Naive thymus-derived CD4-positive, alpha-beta T cell (primary cell): ENCODE measurements at regions of chr2 and their contacts with region 1.

Region 1: GRCh38 chr2:221573430-221574230 is 1.5 kb upstream of the EPHA4 start:
- DNase-seq: peak; percentile 60 to 90 (median 77)
- ATAC-seq: peak; percentile 65
- H3K4me3 ChIP-seq: peak overlapping the region; percentile 91
- H3K4me3 Mint-ChIP-seq: peak overlapping the region; percentile 77 to 97 (median 86)
- H3K27ac ChIP-seq: no peak overlapping the region
- H3K27ac Mint-ChIP-seq: peak overlapping the region in 5 of 9 donors; percentile 10 to 76 (median 71)
- H3K4me1 ChIP-seq: peaks cover 11 to 17% of the 10 kb centered on the region in 2 donors
- H3K4me1 Mint-ChIP-seq: peaks cover 22 to 35% (median 31%) of the 10 kb centered on the region in 7 donors
- H3K27me3 ChIP-seq: peaks cover 0 to 4% of the 10 kb centered on the region in 2 donors
- H3K27me3 Mint-ChIP-seq: peaks cover 33 to 68% (median 59%) of the 10 kb centered on the region in 5 donors

Region 2: DNA sequence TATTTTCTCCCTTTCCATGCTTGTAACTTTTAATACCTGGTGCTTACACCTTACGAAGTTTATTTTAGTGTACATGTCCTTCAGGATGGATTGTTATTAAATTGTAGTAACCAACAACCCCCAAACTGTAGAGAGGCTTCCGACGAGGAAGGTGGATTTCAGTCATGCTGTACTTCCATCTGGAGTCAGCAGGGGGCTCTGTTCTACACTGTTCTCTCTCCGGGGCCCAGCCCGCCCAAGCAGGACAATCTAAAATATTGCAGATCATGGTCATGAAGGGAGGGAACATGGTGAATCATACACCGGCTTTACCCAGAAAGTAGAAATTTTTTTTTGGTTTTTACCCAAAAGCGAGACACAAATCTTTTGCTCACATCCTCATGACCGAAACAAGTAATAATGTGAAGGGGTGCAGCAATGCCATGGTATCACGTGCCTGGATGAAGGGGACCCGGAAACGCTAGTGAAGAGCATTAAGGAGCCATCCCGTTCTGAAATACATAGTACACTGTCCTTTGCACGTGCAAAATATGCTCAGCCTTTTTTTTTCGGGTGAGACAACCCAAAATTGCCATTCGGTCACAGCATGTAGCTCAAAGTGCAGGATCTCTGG is 886.3 kb before region 1 on chr2:
- CTCF ChIA-PET with region 1: interaction called, 3 read pairs
- POLR2A ChIA-PET with region 1: no interaction called
- intact Hi-C with region 1: loop called (anchors 1 kb)
- DNase-seq: peak; percentile 13 to 61 (median 50)
- ATAC-seq: peak; percentile 89
- H3K4me3 ChIP-seq: no peak overlapping the region
- H3K4me3 Mint-ChIP-seq: no peak overlapping the region
- H3K27ac ChIP-seq: no peak overlapping the region
- H3K27ac Mint-ChIP-seq: no peak overlapping the region
- H3K4me1 ChIP-seq: no peaks in the 10 kb centered on the region
- H3K4me1 Mint-ChIP-seq: no peaks in the 10 kb centered on the region
- H3K27me3 ChIP-seq: no peaks in the 10 kb centered on the region
- H3K27me3 Mint-ChIP-seq: peaks cover 2 to 35% (median 18%) of the 10 kb centered on the region in 5 donors

Region 3: DNA sequence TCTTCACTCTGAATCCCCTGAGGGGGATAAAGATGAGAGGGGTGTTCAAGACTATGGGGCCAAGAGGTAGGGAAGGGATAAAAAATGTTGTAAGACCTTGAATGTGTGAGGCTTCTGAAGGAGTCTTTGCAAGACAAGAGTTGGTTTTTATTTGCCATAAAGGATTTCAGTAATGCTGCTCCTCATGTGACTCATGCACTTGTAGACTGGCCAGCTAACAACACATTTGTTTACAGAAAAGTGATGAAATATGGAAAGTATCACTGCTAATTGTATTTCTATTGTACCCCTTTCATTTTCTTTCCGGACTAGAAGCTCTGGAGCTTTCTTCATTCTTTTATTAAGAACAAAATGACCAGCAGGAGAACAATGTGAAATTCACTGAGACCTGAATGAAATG is 783.7 kb before region 1 on chr2:
- CTCF ChIA-PET with region 1: no interaction called
- POLR2A ChIA-PET with region 1: no interaction called
- intact Hi-C with region 1: no loop called
- DNase-seq: no peak
- ATAC-seq: no peak
- H3K4me3 ChIP-seq: no peak overlapping the region
- H3K4me3 Mint-ChIP-seq: no peak overlapping the region
- H3K27ac ChIP-seq: no peak overlapping the region
- H3K27ac Mint-ChIP-seq: no peak overlapping the region
- H3K4me1 ChIP-seq: no peaks in the 10 kb centered on the region
- H3K4me1 Mint-ChIP-seq: no peaks in the 10 kb centered on the region
- H3K27me3 ChIP-seq: no peaks in the 10 kb centered on the region
- H3K27me3 Mint-ChIP-seq: peaks cover 0 to 6% (median 0%) of the 10 kb centered on the region in 5 donors

Region 4: DNA sequence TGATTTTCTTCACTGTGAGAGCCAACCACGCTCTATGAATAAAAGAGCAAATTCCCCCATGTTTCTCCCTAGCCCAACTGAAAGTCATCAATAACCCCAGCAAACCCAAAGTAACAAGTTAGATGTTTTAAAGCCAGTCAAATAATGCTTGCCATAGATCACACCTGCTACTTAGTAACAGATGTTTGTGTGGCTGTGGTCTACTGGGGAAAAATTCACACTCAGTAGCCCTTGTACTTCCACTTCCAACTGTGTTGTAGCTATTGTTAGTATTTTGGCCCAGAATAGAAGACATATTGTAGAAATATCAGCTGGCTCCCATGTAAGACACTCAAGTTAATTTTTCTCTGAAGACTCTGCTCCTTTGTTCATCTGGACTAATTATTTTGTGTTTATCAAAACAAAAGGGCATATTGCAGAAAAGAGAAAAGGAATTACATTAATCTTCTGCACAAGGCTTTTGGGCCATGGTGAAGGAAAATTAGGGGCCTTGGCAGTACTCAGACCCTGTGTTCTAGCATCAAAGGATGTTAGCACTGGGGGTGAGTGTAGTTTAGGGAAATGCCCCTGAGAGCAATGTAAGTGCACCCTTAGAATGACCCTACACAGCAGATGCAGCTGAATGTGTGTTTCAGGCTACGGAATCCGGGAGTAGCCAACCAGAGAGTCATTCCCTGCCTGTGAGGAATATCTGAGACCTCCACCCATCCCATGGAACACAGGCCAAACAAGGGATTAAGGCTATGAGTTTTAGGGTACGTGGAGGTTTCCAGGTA is 523.4 kb before region 1 on chr2:
- CTCF ChIA-PET with region 1: no interaction called
- POLR2A ChIA-PET with region 1: no interaction called
- intact Hi-C with region 1: no loop called
- DNase-seq: no peak
- ATAC-seq: no peak
- H3K4me3 ChIP-seq: no peak overlapping the region
- H3K4me3 Mint-ChIP-seq: no peak overlapping the region
- H3K27ac ChIP-seq: no peak overlapping the region
- H3K27ac Mint-ChIP-seq: no peak overlapping the region
- H3K4me1 ChIP-seq: no peaks in the 10 kb centered on the region
- H3K4me1 Mint-ChIP-seq: peaks cover 0 to 7% (median 0%) of the 10 kb centered on the region in 7 donors
- H3K27me3 ChIP-seq: no peaks in the 10 kb centered on the region
- H3K27me3 Mint-ChIP-seq: peaks cover 0 to 4% (median 0%) of the 10 kb centered on the region in 5 donors

Region 5: GRCh38 chr2:221104361-221104811 is 469.2 kb before region 1 on chr2:
- CTCF ChIA-PET with region 1: no interaction called
- POLR2A ChIA-PET with region 1: no interaction called
- intact Hi-C with region 1: loop called (anchors 10 kb)
- DNase-seq: no peak
- ATAC-seq: no peak
- H3K4me3 ChIP-seq: no peak overlapping the region
- H3K4me3 Mint-ChIP-seq: no peak overlapping the region
- H3K27ac ChIP-seq: no peak overlapping the region
- H3K27ac Mint-ChIP-seq: no peak overlapping the region
- H3K4me1 ChIP-seq: no peaks in the 10 kb centered on the region
- H3K4me1 Mint-ChIP-seq: peaks cover 0 to 7% (median 0%) of the 10 kb centered on the region in 7 donors
- H3K27me3 ChIP-seq: no peaks in the 10 kb centered on the region
- H3K27me3 Mint-ChIP-seq: peaks cover 0 to 13% (median 5%) of the 10 kb centered on the region in 5 donors

Region 6: GRCh38 chr2:221318376-221319130 is 255.1 kb before region 1 on chr2:
- CTCF ChIA-PET with region 1: no interaction called
- POLR2A ChIA-PET with region 1: interaction called, 3 read pairs
- intact Hi-C with region 1: loop called in 1 of 2 experiments (anchors 10 kb)
- DNase-seq: no peak
- ATAC-seq: no peak
- H3K4me3 ChIP-seq: no peak overlapping the region
- H3K4me3 Mint-ChIP-seq: no peak overlapping the region
- H3K27ac ChIP-seq: no peak overlapping the region
- H3K27ac Mint-ChIP-seq: no peak overlapping the region
- H3K4me1 ChIP-seq: no peaks in the 10 kb centered on the region
- H3K4me1 Mint-ChIP-seq: peaks cover 0 to 12% (median 2%) of the 10 kb centered on the region in 7 donors
- H3K27me3 ChIP-seq: no peaks in the 10 kb centered on the region
- H3K27me3 Mint-ChIP-seq: peaks cover 2 to 23% (median 13%) of the 10 kb centered on the region in 5 donors

Region 7: DNA sequence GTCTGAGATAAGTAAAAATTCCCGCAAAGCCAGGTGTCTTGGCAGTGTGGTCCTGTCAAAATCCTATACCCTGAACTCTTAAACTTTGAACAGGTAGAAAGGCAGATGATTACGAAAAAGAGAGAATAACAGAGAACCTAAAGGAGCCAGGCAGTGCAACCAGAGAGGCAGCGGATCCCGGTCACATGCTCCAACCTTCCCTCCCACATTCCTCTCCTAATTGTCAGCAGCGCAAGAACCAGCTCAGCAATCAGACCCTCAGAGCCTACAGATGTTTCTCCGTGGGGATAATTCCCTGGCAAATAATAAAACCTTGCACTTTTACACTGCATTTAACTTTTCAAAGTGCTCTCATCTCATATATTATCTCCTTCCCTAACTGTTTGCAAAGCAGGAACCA is 126.3 kb before region 1 on chr2:
- CTCF ChIA-PET with region 1: no interaction called
- POLR2A ChIA-PET with region 1: no interaction called
- intact Hi-C with region 1: loop called in 1 of 2 experiments (anchors 5 kb)
- DNase-seq: no peak
- ATAC-seq: no peak
- H3K4me3 ChIP-seq: no peak overlapping the region
- H3K4me3 Mint-ChIP-seq: no peak overlapping the region
- H3K27ac ChIP-seq: no peak overlapping the region
- H3K27ac Mint-ChIP-seq: no peak overlapping the region
- H3K4me1 ChIP-seq: no peaks in the 10 kb centered on the region
- H3K4me1 Mint-ChIP-seq: no peaks in the 10 kb centered on the region
- H3K27me3 ChIP-seq: no peaks in the 10 kb centered on the region
- H3K27me3 Mint-ChIP-seq: no peaks in the 10 kb centered on the region

Region 8: GRCh38 chr2:221529943-221530652 is 43.5 kb before region 1 on chr2:
- CTCF ChIA-PET with region 1: interaction called, 3 read pairs
- POLR2A ChIA-PET with region 1: interaction called, 3 read pairs
- intact Hi-C with region 1: loop called in 1 of 2 experiments (anchors 5 kb)
- DNase-seq: peak in 1 of 9 donors; percentile 37
- ATAC-seq: peak; percentile 56
- H3K4me3 ChIP-seq: no peak overlapping the region
- H3K4me3 Mint-ChIP-seq: peak overlapping the region; percentile 45 to 84 (median 62)
- H3K27ac ChIP-seq: no peak overlapping the region
- H3K27ac Mint-ChIP-seq: peak overlapping the region; percentile 57 to 95 (median 84)
- H3K4me1 ChIP-seq: peaks cover 37 to 38% of the 10 kb centered on the region in 2 donors
- H3K4me1 Mint-ChIP-seq: peaks cover 20 to 54% (median 48%) of the 10 kb centered on the region in 7 donors
- H3K27me3 ChIP-seq: no peaks in the 10 kb centered on the region
- H3K27me3 Mint-ChIP-seq: peaks cover 0 to 8% (median 0%) of the 10 kb centered on the region in 5 donors

Region 9: GRCh38 chr2:222860740-222861410 is 1287.2 kb after region 1 on chr2 and contains the start of gene ACSL3:
- CTCF ChIA-PET with region 1: no interaction called
- POLR2A ChIA-PET with region 1: no interaction called
- intact Hi-C with region 1: loop called in 1 of 2 experiments (anchors 5 kb)
- DNase-seq: peak; percentile 85 to 96 (median 91)
- ATAC-seq: peak; percentile 99
- H3K4me3 ChIP-seq: peak within 1 kb of the TSS; percentile 82
- H3K4me3 Mint-ChIP-seq: peak within 1 kb of the TSS in 9 of 10 donors; percentile 62 to 88 (median 79)
- H3K27ac ChIP-seq: peak within 1 kb of the TSS; percentile 90
- H3K27ac Mint-ChIP-seq: peak within 1 kb of the TSS in 8 of 9 donors; percentile 87 to 96 (median 92)
- H3K4me1 ChIP-seq: peaks cover 13 to 20% of the 10 kb centered on the region in 2 donors
- H3K4me1 Mint-ChIP-seq: peaks cover 0 to 15% (median 9%) of the 10 kb centered on the region in 7 donors
- H3K27me3 ChIP-seq: no peaks in the 10 kb centered on the region
- H3K27me3 Mint-ChIP-seq: peaks cover 0 to 15% (median 0%) of the 10 kb centered on the region in 5 donors
- total RNA-seq, gene ACSL3: 30.3 to 69.6 (median 40.5) TPM